Activated T-helper 1 cell treated with anti-CD3 and anti-CD28 coated beads, Interleukin-12 subunit alpha, Interleukin-12 subunit beta, Interleukin-2, Interleukin-4 antibody, amounts not matched to agents 30 ng/mL and 10 ng/mL and 1 ng/mL, durations not matched to agents 14 hours and 24 hours and 36 hours (primary cell): ENCODE measurements at regions of chr5 and their contacts with region 1.

Region 1: GRCh38 chr5:119079318-119079921 is 8.5 kb downstream of the DMXL1 start:
- DNase-seq: peak; percentile 25
- H3K4me3 Mint-ChIP-seq: peak overlapping the region; percentile 23
- H3K27ac Mint-ChIP-seq: peak overlapping the region; percentile 70
- H3K4me1 Mint-ChIP-seq: peaks cover 50% of the 10 kb centered on the region
- H3K27me3 Mint-ChIP-seq: no peaks in the 10 kb centered on the region

Region 2: GRCh38 chr5:118723021-118723338 is 356.4 kb before region 1 on chr5:
- intact Hi-C with region 1: no loop called
- DNase-seq: no peak
- H3K4me3 Mint-ChIP-seq: no peak overlapping the region
- H3K27ac Mint-ChIP-seq: no peak overlapping the region
- H3K4me1 Mint-ChIP-seq: no peaks in the 10 kb centered on the region
- H3K27me3 Mint-ChIP-seq: no peaks in the 10 kb centered on the region

Region 3: GRCh38 chr5:119031905-119032304 is 47.5 kb before region 1 on chr5:
- intact Hi-C with region 1: loop called (anchors 1 kb)
- DNase-seq: no peak
- H3K4me3 Mint-ChIP-seq: peak overlapping the region; percentile 45
- H3K27ac Mint-ChIP-seq: peak overlapping the region; percentile 21
- H3K4me1 Mint-ChIP-seq: peaks cover 35% of the 10 kb centered on the region
- H3K27me3 Mint-ChIP-seq: peaks cover 2% of the 10 kb centered on the region

Region 4: GRCh38 chr5:119063579-119064379 is 15.6 kb before region 1 on chr5:
- intact Hi-C with region 1: loop called (anchors 1 kb)
- DNase-seq: no peak
- H3K4me3 Mint-ChIP-seq: peak overlapping the region; percentile 7
- H3K27ac Mint-ChIP-seq: peak overlapping the region; percentile 52
- H3K4me1 Mint-ChIP-seq: peaks cover 14% of the 10 kb centered on the region
- H3K27me3 Mint-ChIP-seq: peaks cover 1% of the 10 kb centered on the region

Region 5: DNA sequence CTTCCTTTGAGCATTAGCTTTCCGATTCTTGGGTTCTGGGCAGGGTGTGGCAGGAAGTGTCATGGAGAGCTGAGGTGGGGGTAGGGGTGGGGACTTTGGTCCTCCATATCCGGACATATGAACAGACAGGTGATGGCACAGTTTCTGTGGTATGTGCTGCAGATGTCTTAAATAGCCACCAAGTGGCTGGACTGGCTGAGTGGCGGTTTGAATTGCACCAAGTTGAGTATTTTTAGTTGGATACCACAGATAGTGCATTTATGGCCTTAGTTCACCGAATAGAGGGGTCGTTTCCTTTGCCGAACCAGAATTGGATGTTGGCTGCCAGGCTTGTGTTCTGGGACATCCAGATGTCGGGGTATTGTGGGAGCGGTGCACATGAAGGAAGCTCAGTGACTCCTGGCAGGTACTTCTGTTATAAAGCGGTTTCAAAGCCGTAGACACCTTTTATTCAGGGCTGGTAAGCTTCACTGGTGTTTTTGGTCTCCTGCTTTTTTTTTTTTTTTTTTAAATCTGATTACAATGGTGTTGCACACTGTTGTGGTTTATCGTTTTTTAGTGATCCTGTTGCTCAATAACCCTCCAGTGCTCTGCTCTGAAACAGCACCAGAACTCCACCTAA is 261.3 kb after region 1 on chr5:
- intact Hi-C with region 1: loop called (anchors 1 kb)
- DNase-seq: peak; percentile 63
- H3K4me3 Mint-ChIP-seq: peak overlapping the region; percentile 83
- H3K27ac Mint-ChIP-seq: peak overlapping the region; percentile 100
- H3K4me1 Mint-ChIP-seq: peaks cover 95% of the 10 kb centered on the region
- H3K27me3 Mint-ChIP-seq: no peaks in the 10 kb centered on the region

Region 6: GRCh38 chr5:119411935-119412602 is 332.6 kb after region 1 on chr5:
- intact Hi-C with region 1: loop called (anchors 2 kb)
- DNase-seq: peak; percentile 36
- H3K4me3 Mint-ChIP-seq: peak overlapping the region; percentile 84
- H3K27ac Mint-ChIP-seq: peak overlapping the region; percentile 38
- H3K4me1 Mint-ChIP-seq: peaks cover 35% of the 10 kb centered on the region
- H3K27me3 Mint-ChIP-seq: peaks cover 4% of the 10 kb centered on the region

Region 7: DNA sequence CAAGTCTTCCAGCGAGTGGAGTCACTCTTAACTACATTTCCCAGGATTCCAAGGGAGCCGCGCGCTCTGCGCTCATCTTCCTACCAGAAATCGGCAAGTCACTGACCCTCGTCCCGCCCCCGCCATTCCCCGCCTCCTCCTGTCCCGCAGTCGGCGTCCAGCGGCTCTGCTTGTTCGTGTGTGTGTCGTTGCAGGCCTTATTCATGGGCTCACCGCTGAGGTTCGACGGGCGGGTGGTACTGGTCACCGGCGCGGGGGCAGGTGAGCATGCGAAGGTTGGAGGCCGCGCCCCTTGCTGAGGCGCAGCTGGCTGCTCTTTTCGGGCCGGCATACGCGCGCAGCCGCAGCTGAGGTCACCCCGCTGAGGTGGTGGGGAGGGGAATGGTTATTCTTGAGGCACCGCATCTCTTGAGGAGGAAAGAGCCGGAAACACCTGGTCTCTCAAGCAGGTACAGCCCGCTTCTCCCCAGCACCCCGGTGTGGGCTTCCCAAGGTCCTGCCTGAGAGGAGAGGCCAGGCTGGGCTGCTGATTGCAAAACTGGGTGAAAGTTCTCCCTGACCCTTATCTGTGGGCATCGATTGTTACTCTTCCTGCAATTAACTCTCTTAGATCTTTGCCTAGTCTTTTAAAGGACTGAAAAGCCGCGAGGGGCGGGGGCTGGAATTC is 373.1 kb after region 1 on chr5 and contains the start of gene HSD17B4:
- intact Hi-C with region 1: loop called (anchors 2 kb)
- DNase-seq: peak; percentile 72
- H3K4me3 Mint-ChIP-seq: peak within 1 kb of the TSS; percentile 93
- H3K27ac Mint-ChIP-seq: peak within 1 kb of the TSS; percentile 88
- H3K4me1 Mint-ChIP-seq: peaks cover 20% of the 10 kb centered on the region
- H3K27me3 Mint-ChIP-seq: peaks cover 8% of the 10 kb centered on the region
- total RNA-seq, gene HSD17B4: 65.6 and 78.2 TPM in 2 replicates